ENCODE measurements at regions of chr3 and their contacts with region 1.

Region 1: DNA sequence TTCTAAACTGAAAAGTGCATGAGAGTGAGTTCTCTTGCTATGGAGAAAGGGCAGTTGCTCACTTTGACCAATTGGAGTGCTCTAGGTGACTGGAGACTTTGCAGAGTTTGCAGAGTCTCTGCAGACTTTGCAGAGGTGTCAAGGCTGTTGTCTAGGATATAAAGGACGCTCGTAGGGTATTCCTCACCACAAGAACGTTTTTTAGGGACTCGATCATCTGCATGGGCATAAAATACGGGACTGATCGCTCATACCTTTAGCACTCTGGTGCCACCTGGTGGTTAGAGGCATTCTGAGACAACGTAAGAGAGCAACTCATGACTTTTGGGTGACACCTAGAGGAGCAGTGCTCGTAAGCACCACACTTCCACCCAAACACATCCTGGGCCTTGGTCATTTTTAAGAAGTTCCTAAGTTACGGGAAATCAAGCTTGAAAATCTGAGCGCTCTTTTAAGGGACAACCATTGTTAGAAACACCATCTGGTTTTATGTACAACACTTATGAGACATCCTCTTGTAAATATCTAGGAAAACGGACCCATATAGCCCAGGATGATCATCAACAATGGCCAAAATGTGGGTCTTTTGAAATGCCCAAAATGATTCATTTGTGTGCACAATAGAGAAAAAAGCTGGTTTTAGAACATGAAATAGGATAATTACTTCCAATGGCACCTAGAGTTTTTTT is 51.6 kb upstream of the XCR1 start:
- DNase-seq: peak; percentile 83 to 84
- H3K4me3 ChIP-seq: no peak overlapping the region
- H3K27ac ChIP-seq: no peak overlapping the region; the same call in 1 of the 2 replicates
- H3K4me1 ChIP-seq: peaks cover 49% of the 10 kb centered on the region
- H3K27me3 ChIP-seq: no peaks in the 10 kb centered on the region
- CTCF ChIP-seq: peak; percentile 94

Region 2: GRCh38 chr3:45688882-45689756 is 389.7 kb before region 1 on chr3 and contains the start of gene SACM1L:
- CTCF ChIA-PET with region 1: no interaction called
- POLR2A ChIA-PET with region 1: interaction called, 5 read pairs
- intact Hi-C with region 1: loop called (anchors 5 kb)
- DNase-seq: peak; percentile 94 to 96
- H3K4me3 ChIP-seq: peak within 1 kb of the TSS; percentile 97
- H3K27ac ChIP-seq: peak within 1 kb of the TSS; percentile 76
- H3K4me1 ChIP-seq: peaks cover 16% of the 10 kb centered on the region; the same call in 1 of the 2 replicates
- H3K27me3 ChIP-seq: no peaks in the 10 kb centered on the region
- CTCF ChIP-seq: no peak
- total RNA-seq, gene SACM1L: 29.9 and 33.9 TPM in 2 replicates

Region 3: GRCh38 chr3:45807681-45808540 is 270.9 kb before region 1 on chr3:
- CTCF ChIA-PET with region 1: interaction called, 18 read pairs
- POLR2A ChIA-PET with region 1: no interaction called
- intact Hi-C with region 1: no loop called
- DNase-seq: no peak
- H3K4me3 ChIP-seq: no peak overlapping the region
- H3K27ac ChIP-seq: no peak overlapping the region
- H3K4me1 ChIP-seq: no peaks in the 10 kb centered on the region
- H3K27me3 ChIP-seq: no peaks in the 10 kb centered on the region
- CTCF ChIP-seq: no peak

Region 4: DNA sequence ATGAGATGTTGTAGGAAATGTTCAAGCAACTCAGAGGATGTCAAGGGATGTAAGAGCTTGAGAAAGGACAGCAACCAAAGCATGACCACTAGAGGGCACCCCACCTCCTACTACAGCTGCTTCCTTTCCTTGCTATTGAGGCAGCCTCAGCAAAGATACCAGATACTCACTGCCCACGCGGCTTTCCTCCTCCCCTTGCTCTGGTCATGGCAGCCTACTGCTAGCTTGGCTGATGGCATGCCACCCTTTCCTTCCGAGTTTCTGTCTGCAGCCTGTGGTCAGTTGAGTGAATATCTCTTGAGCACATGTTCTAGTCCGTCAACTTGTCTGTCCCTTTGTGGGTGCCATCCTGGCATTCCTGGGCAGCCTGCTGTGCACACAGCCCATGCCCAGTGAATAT is 140.0 kb before region 1 on chr3:
- CTCF ChIA-PET with region 1: interaction called, 11 read pairs
- POLR2A ChIA-PET with region 1: no interaction called
- intact Hi-C with region 1: loop called (anchors 1 kb)
- DNase-seq: peak; percentile 73
- H3K4me3 ChIP-seq: no peak overlapping the region
- H3K27ac ChIP-seq: no peak overlapping the region
- H3K4me1 ChIP-seq: peaks cover 8% of the 10 kb centered on the region; the same call in 1 of the 2 replicates
- H3K27me3 ChIP-seq: no peaks in the 10 kb centered on the region
- CTCF ChIP-seq: peak; percentile 86

Region 5: DNA sequence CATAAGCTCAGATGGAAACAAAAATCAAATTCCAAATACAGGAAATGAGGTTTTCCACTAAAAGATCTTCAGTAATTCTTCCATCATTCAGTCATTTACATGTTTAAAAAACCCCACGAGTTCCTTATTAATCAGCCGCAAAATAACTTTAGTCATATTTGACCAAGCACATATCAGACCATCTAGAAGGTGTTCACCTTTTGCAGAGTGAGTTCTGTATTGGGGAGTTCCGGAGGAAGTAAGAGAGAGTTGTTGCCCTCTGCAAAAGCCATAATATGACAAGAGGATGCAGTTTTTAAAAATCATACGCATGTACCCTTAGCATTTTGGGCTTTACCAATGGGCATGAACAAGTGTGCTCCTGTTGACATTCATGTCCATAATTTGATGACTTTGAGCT is 67.7 kb after region 1 on chr3:
- CTCF ChIA-PET with region 1: no interaction called
- POLR2A ChIA-PET with region 1: no interaction called
- intact Hi-C with region 1: no loop called
- DNase-seq: no peak
- H3K4me3 ChIP-seq: no peak overlapping the region
- H3K27ac ChIP-seq: no peak overlapping the region
- H3K4me1 ChIP-seq: no peaks in the 10 kb centered on the region
- H3K27me3 ChIP-seq: no peaks in the 10 kb centered on the region
- CTCF ChIP-seq: no peak

Region 6: DNA sequence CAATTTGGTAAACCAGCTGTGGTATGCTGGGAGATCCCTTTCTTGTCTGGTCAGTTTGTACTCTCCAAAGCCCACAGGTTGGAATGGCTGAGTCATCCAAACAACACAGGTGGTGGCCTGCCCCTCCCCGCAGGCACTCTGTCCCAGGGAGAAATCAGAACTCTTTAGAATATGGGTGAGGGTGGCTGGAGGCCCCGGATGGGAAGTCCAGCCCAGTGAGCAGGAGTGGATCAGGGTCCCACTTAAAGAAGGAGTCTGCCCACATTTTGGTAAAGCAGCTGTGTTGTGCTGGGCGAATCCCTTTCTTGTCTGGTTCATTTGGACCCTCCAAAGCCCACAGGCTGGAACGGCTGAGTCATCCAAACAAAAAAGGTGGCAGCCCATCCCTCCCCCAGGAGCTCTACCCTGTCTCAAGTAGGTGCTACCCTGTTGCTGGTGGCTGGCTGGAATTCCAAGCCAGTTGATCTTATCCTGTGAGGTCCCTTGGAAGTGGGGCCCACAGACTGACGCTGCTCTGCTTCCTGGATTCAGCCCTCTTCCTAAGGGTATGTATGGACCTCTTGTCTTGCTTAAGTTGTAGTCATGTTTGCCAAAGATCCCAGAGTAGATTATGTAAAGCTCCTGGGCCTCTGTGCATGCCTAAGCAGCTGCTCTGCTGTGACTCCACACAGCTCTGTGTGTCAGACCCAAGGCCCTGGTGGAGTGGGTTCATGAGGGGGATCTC is 84.6 kb after region 1 on chr3:
- CTCF ChIA-PET with region 1: interaction called, 3 read pairs
- POLR2A ChIA-PET with region 1: no interaction called
- intact Hi-C with region 1: loop called (anchors 1 kb)
- DNase-seq: peak; percentile 88 to 94
- H3K4me3 ChIP-seq: peak overlapping the region; percentile 54
- H3K27ac ChIP-seq: peak overlapping the region; percentile 93
- H3K4me1 ChIP-seq: peaks cover 35% of the 10 kb centered on the region
- H3K27me3 ChIP-seq: no peaks in the 10 kb centered on the region
- CTCF ChIP-seq: 0 out of 2 replicates have a peak, but pooled peaks have one; percentile 15

Region 7: DNA sequence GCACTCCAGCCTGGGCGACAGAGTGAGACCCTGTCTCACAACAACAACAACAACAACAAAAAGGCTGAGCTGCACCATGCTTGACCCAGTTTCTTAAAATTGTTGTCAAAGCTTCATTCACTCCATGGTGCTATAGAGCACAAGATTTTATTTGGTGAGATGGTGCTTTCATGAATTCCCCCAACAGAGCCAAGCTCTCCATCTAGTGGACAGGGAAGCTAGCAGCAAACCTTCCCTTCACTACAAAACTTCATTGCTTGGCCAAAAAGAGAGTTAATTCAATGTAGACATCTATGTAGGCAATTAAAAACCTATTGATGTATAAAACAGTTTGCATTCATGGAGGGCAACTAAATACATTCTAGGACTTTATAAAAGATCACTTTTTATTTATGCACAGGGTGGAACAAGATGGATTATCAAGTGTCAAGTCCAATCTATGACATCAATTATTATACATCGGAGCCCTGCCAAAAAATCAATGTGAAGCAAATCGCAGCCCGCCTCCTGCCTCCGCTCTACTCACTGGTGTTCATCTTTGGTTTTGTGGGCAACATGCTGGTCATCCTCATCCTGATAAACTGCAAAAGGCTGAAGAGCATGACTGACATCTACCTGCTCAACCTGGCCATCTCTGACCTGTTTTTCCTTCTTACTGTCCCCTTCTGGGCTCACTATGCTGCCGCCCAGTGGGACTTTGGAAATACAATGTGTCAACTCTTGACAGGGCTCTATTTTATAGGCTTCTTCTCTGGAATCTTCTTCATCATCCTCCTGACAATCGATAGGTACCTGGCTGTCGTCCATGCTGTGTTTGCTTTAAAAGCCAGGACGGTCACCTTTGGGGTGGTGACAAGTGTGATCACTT is 293.9 kb after region 1 on chr3:
- CTCF ChIA-PET with region 1: interaction called, 3 read pairs
- POLR2A ChIA-PET with region 1: no interaction called
- intact Hi-C with region 1: loop called (anchors 1 kb)
- DNase-seq: no peak
- H3K4me3 ChIP-seq: no peak overlapping the region
- H3K27ac ChIP-seq: no peak overlapping the region
- H3K4me1 ChIP-seq: peaks cover 19% of the 10 kb centered on the region
- H3K27me3 ChIP-seq: no peaks in the 10 kb centered on the region
- CTCF ChIP-seq: peak; percentile 76

Measured in PC-9 (cell line).